Dendritic cell treated with granulocyte-macrophage colony-stimulating factor and Interleukin-4, amounts not matched to agents 40 ng/mL and 50 ng/mL, for 4 days (primary cell): ENCODE measurements at regions of chrX and their contacts with region 1.

Region 1: GRCh38 chrX:14528629-14529289 is 577 bp upstream of the GLRA2 start:
- H3K4me3 Mint-ChIP-seq: no peak overlapping the region
- H3K27ac Mint-ChIP-seq: no peak overlapping the region
- H3K4me1 Mint-ChIP-seq: peaks cover 5% of the 10 kb centered on the region
- H3K27me3 Mint-ChIP-seq: peaks cover 2% of the 10 kb centered on the region

Region 2: GRCh38 chrX:14039344-14039743 is 489.4 kb before region 1 on chrX:
- intact Hi-C with region 1: loop called (anchors 5 kb)
- H3K4me3 Mint-ChIP-seq: no peak overlapping the region
- H3K27ac Mint-ChIP-seq: no peak overlapping the region
- H3K4me1 Mint-ChIP-seq: no peaks in the 10 kb centered on the region
- H3K27me3 Mint-ChIP-seq: no peaks in the 10 kb centered on the region

Region 3: GRCh38 chrX:14095702-14096101 is 433.1 kb before region 1 on chrX:
- intact Hi-C with region 1: loop called (anchors 5 kb)
- H3K4me3 Mint-ChIP-seq: no peak overlapping the region
- H3K27ac Mint-ChIP-seq: no peak overlapping the region
- H3K4me1 Mint-ChIP-seq: no peaks in the 10 kb centered on the region
- H3K27me3 Mint-ChIP-seq: no peaks in the 10 kb centered on the region

Region 4: GRCh38 chrX:14753441-14753840 is 224.7 kb after region 1 on chrX:
- intact Hi-C with region 1: no loop called
- H3K4me3 Mint-ChIP-seq: no peak overlapping the region
- H3K27ac Mint-ChIP-seq: no peak overlapping the region
- H3K4me1 Mint-ChIP-seq: no peaks in the 10 kb centered on the region
- H3K27me3 Mint-ChIP-seq: no peaks in the 10 kb centered on the region